Heart right ventricle (tissue), 16 donors: ENCODE measurements at regions of chr9 and their contacts with region 1.

Region 1: GRCh38 chr9:130243015-130243734 is 22.4 kb upstream of the HMCN2 start:
- DNase-seq: peak; percentile 58 to 78
- ATAC-seq: peak; percentile 62 to 77 (median 72)
- H3K4me3 ChIP-seq: peak overlapping the region in 1 of 10 donors; percentile 9
- H3K27ac ChIP-seq: no peak overlapping the region
- H3K4me1 ChIP-seq: peaks cover 0 to 14% (median 0%) of the 10 kb centered on the region in 9 donors
- H3K27me3 ChIP-seq: no peaks in the 10 kb centered on the region
- CTCF ChIP-seq: peak; percentile 88 to 96 (median 93)

Region 2: DNA sequence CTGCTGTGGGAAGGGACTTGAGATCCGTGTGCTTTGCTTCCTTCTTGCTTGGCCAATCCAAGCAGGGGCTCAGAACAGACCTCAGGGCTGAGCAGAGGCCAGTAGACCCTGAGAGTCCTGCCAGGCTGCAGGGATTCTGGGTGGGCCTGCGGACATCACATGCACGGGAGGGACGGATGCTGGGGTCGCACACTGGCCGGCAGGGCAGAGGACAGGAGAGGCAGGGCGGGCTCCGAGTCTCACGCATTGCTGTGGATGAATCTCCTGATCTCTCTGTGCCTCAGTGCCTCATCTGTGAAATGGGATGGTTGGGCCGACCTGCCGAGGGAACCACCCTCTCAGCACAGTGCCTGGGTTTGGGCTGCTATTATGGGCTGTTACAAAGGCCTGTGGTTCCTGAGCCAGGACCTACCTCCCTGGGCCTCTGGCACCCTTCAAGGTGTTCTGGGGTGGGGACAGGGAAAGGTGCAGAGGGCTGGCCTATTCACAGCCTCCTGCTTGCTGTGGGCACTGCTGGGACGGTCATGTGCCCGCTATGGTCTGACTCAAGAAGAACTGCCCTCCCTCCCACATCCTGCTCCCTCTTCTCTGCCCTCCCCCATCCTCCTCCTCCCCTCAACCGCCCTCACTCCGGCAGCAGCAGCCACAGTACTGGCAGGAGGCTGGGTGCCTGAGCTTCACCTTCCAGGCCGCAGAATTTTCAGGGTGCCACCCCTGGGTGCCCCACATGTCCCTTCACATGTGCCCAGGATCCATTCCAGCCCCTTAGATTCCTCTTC is 27.6 kb before region 1 on chr9:
- intact Hi-C with region 1: no loop called
- DNase-seq: no peak
- ATAC-seq: no peak
- H3K4me3 ChIP-seq: no peak overlapping the region
- H3K27ac ChIP-seq: no peak overlapping the region
- H3K4me1 ChIP-seq: peaks cover 0 to 3% (median 0%) of the 10 kb centered on the region in 9 donors
- H3K27me3 ChIP-seq: no peaks in the 10 kb centered on the region
- CTCF ChIP-seq: no peak

Region 3: DNA sequence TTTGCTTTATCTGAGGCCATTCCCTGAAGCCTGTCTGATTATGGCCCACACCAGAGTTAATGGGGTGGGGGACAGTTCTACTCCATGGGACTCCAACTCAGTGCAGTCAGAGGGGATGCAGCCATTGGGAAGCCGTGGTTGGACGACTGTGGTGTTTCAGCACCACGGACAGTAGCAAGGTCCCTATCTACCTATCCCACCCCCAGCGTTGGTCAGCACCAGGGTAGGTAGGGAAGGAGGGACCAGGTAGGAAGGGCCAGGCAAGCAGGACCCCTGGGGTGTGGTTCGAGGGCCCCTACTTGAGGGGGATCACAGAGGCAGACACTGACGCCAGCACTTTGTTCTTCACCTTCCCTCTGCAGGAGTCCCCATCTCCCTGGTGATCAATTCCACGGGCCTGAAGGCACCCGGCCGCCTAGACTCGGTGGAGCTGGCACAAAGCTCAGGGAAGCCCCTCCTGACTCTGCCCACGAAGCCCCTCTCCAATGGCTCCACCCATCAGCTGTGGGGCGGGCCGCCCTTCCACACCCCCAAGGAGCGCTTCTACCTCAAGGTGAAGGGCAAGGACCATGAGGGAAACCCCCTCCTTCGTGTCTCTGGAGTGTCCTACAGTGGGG is 55.6 kb after region 1 on chr9:
- intact Hi-C with region 1: no loop called
- DNase-seq: no peak
- ATAC-seq: no peak
- H3K4me3 ChIP-seq: no peak overlapping the region
- H3K27ac ChIP-seq: no peak overlapping the region
- H3K4me1 ChIP-seq: peaks cover 0 to 33% (median 4%) of the 10 kb centered on the region in 9 donors
- H3K27me3 ChIP-seq: peaks cover 0 to 11% (median 4%) of the 10 kb centered on the region in 7 donors
- CTCF ChIP-seq: no peak

Region 4: DNA sequence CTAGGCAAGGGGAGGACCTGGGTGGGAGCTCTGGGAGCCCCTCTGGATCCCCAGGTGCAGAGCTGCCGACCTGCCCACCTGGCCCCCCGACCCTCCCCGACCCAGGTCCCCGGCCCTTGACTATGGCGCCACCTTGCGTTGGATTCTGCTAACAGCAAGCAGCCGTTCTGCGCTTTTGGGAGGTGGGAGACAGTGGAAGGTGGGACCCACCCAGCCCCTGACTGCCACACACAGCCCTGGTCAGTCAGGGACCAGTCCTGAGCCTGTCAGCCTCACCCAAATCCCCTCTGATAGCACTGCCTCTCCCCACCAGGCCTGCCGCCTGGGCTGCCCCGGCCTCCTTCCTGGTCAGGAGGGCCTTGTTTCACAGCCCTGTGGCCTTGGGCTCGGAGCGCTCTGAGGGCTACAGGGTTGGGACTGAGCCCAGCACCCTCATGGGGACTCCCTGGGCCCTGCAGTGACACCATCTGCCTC is 100.3 kb after region 1 on chr9:
- intact Hi-C with region 1: loop called in 2 of 10 experiments (anchors 5 kb)
- DNase-seq: no peak
- ATAC-seq: peak in 7 of 8 donors; percentile 3 to 41 (median 24)
- H3K4me3 ChIP-seq: no peak overlapping the region
- H3K27ac ChIP-seq: no peak overlapping the region
- H3K4me1 ChIP-seq: no peaks in the 10 kb centered on the region
- H3K27me3 ChIP-seq: peaks cover 0 to 6% (median 0%) of the 10 kb centered on the region in 7 donors
- CTCF ChIP-seq: peak; percentile 65 to 81 (median 73)